Aorta (tissue), 5 donors: ENCODE measurements at regions of chr3 and their contacts with region 1.

Region 1: DNA sequence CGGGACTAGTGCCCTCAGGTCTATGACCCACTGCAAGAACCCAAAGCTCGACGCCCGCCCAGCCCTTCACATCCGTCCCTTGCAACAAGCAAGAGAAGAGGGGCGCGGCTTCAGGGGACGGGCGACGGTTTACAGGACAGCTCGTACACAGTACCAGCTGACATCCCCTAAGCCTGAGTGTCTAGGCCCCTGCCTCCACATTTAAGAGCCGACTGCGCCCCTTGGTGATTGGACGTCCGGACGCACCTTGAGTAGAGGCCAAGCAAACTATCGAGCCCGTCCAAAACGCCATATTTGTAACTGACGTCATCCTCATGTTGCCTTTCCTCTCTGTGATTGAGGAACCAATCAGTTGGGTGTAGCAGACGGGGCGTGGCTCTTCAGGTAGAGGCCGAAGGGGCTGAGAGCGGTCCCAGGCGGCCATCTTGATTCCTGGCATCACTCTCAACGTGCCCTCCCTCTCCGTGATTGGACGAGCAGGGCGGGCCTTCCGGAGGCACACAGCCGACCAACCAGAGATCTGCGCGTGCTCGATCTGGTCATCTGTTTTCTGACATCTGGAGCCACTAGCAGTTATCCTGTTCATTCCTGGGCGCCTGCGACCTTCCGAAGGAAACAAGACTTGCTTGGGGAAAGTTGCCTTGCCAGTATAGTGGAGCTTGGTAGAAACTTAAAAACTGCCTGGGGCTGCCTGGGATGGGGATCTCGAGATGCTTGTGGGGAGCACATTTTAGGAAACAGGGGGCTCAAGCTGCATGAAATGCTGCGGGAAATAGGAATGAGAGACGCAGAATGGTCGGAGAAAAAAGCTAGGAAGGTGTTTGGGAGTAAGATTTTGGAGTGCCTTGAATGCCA is 4.0 kb upstream of the RPL14 start:
- DNase-seq: peak; percentile 99
- ATAC-seq: peak; percentile 96
- H3K4me3 ChIP-seq: peak overlapping the region; percentile 37 to 52
- H3K27ac ChIP-seq: peak overlapping the region in 1 of 2 donors; percentile 75
- H3K4me1 ChIP-seq: peaks cover 0 to 2% of the 10 kb centered on the region in 2 donors
- H3K27me3 ChIP-seq: no peaks in the 10 kb centered on the region

Region 2: GRCh38 chr3:40309418-40309924 is 143.6 kb before region 1 on chr3 and contains the start of gene EIF1B:
- intact Hi-C with region 1: loop called (anchors 5 to 10 kb)
- DNase-seq: peak; percentile 99 to 100
- ATAC-seq: peak; percentile 99
- H3K4me3 ChIP-seq: peak within 1 kb of the TSS; percentile 94 to 100
- H3K27ac ChIP-seq: peak within 1 kb of the TSS; percentile 97 to 98
- H3K4me1 ChIP-seq: no peaks in the 10 kb centered on the region
- H3K27me3 ChIP-seq: no peaks in the 10 kb centered on the region
- total RNA-seq, gene EIF1B: 51.3 to 51.6 TPM

Region 3: GRCh38 chr3:40317061-40317855 is 135.8 kb before region 1 on chr3:
- intact Hi-C with region 1: loop called (anchors 5 to 10 kb)
- DNase-seq: no peak
- ATAC-seq: no peak
- H3K4me3 ChIP-seq: no peak overlapping the region
- H3K27ac ChIP-seq: no peak overlapping the region
- H3K4me1 ChIP-seq: no peaks in the 10 kb centered on the region
- H3K27me3 ChIP-seq: no peaks in the 10 kb centered on the region

Region 4: DNA sequence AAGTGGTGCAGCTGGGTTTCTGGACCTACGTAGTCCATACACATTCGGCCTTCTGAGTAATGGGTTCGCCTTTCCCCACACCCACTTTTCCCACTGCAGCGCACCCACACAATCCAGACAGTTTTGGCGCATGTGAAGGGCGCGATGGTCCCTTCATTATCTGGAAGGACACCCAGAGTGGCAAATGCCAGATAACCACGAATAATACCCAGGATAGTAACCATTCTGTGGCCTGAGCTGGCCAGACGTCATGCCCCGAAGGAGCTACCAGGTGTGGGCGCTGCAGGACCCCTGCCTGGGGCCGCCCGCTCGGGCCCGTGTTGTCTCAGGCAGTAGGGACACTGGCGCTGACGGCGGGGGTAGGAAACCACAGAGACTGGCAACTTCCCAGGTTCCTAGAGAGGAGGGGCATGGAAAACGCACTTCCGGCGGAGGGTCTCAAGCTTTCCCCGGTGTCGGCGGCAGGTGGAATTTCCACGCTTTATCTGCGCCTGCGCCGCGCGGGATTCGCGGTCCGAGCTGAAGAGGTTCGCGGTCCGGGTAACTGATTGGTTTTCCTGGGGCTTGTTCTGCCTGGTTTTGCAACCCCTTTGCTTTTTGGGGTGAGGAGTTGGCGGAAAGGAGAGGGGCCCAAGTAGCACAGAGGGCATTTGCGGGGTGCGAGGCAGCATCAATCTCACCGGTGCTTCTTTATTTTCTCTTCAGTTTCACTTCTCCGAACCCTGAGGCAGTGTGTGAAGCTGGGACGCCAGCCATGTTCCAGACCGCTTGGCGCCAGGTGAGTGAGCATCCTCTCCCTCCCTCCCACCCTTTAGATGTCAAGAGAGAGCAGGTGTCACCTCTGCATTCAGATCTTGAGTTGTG is 52.7 kb after region 1 on chr3 and contains the start of gene ZNF620:
- intact Hi-C with region 1: loop called in 1 of 2 experiments (anchors 5 kb)
- DNase-seq: peak; percentile 80 to 92
- ATAC-seq: peak; percentile 90
- H3K4me3 ChIP-seq: peak within 1 kb of the TSS; percentile 50 to 85
- H3K27ac ChIP-seq: peak within 1 kb of the TSS in 1 of 2 donors; percentile 90
- H3K4me1 ChIP-seq: peaks cover 0 to 1% of the 10 kb centered on the region in 2 donors
- H3K27me3 ChIP-seq: no peaks in the 10 kb centered on the region
- total RNA-seq, gene ZNF620: 4.7 to 5.1 TPM